ENCODE measurements at regions of chr13 and their contacts with region 1.

Region 1: DNA sequence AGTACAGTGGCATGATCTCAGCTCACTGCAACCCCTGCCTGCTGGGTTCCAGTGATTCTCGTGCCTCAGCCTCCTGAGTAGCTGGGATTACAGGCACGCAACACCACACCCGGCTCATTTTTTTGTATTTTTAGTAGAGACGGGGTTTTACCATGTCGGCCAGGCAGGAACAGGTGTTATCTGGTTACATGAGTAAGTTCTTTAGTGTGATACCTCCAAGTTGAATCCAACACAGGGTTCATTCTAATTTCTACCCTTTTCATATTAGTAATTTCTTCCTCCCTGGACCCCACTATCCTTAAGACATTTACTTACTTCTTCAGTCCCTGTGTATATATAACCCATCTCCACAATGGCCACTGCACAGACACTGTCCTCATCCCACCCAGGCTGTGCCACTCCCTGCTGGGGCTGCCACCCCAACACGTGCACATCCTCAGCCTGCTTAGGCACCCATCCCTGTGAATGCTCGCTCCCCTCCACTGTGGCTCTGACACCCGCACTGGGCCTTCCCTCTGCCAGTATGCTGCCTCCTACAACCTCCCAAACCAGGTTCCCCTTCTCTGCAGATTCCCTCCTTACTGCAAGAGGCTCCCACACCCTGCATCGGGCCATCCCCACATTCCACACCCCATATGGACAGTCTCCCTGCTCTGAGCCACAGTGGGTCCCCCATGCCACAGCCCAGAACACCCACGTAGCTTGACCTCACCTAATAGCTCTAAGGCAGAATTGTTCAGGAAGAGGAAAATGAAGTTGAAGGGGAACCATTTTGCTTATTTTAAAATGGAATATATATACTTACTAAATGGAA is 147.1 kb downstream of the TBC1D4 start:
- DNase-seq: no peak
- ATAC-seq: no peak
- H3K4me3 ChIP-seq: no peak overlapping the region
- H3K27ac ChIP-seq: no peak overlapping the region
- H3K4me1 ChIP-seq: no peaks in the 10 kb centered on the region
- H3K27me3 ChIP-seq: no peaks in the 10 kb centered on the region

Region 2: DNA sequence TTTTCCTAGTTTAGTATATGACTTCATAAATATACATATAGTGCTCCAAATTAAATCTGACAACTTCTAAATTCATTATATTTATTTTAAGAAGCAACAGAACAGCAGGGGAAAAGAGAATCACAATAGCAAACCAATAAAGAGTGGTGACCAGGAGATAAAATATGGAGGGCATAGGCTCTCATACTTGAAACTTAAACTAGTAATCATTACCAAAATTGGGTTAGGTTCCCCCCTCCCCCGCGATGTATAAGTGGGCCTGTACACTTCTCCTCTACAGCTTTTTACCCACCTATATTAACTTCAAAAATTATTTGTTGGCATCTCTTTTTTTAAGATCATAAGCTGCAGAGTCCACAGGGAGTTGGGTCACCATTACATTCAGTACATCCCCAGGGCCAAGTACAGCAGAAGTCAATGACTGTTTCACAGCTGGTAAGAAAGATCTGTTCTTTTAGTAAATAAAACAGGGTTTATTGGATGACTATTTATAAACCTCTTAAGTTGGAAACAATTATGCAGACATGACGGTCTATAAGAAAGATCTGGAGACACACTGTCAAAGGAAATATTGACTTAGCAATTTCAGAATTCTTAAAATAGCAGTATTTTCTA is 1230.1 kb before region 1 on chr13:
- intact Hi-C with region 1: no loop called
- DNase-seq: no peak
- ATAC-seq: no peak
- H3K4me3 ChIP-seq: no peak overlapping the region
- H3K27ac ChIP-seq: no peak overlapping the region
- H3K4me1 ChIP-seq: peaks cover 3 to 4% of the 10 kb centered on the region in 2 donors
- H3K27me3 ChIP-seq: no peaks in the 10 kb centered on the region

Region 3: DNA sequence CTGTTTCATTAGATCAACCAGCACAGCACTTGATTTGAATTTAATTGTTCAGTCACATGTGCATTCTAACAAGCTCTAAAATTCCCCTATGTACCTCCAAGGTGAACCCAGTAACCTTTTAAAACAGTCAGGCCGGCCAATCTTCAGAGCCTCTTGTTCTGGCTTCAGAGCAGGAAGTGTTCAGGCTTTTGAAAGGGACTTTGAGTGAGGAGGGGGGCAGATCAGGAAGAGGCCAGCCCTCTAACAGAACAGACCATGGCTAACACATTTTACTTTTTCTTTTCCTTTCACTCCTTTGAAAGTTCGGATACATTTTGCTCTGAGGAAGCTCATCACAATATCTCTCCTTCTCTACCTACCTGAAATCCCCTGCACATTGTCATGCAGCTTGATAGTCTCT is 243.1 kb before region 1 on chr13:
- intact Hi-C with region 1: no loop called
- DNase-seq: no peak
- ATAC-seq: no peak
- H3K4me3 ChIP-seq: no peak overlapping the region
- H3K27ac ChIP-seq: no peak overlapping the region
- H3K4me1 ChIP-seq: no peaks in the 10 kb centered on the region
- H3K27me3 ChIP-seq: no peaks in the 10 kb centered on the region

Region 4: DNA sequence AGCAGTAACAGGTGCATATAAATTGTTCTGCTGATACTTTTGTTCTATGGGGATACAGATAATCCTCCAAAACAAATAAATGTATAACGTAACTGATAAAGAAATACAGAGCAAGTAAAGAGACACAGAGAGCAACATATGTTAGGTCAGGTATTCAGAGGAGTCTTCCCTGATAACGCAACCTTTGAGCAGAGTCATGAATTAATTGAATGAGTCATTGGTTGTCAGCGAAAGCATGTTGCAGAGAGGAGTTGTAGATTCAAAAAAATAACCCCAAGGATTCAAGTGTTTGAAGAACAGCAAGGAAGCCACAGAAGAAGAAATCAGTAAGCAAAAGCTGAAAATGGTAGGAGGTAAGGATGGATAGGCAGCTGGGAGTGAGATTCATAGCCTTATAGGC is 98.1 kb before region 1 on chr13:
- intact Hi-C with region 1: no loop called
- DNase-seq: no peak
- ATAC-seq: no peak
- H3K4me3 ChIP-seq: no peak overlapping the region
- H3K27ac ChIP-seq: no peak overlapping the region
- H3K4me1 ChIP-seq: no peaks in the 10 kb centered on the region
- H3K27me3 ChIP-seq: no peaks in the 10 kb centered on the region

Region 5: DNA sequence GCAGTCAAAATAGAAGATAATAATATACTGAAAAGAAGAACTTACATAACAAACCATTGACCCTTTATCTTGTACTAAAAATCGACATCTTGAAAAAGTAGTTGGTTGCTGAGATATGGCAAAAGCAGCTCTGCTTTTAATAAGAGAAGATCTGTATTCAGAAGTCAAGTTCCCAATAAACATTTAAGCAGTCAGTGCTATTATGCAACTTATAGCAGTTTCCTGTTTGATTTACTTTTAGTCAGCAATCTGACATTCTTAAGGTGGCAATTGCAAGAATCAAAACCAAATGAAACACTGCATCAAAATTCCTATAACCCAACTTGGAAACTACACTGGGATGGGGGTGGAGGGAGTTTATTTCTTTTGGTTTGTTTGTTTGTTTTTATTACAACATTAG is 18.4 kb before region 1 on chr13:
- intact Hi-C with region 1: loop called in 1 of 2 experiments (anchors 2 kb)
- DNase-seq: no peak
- ATAC-seq: no peak
- H3K4me3 ChIP-seq: no peak overlapping the region
- H3K27ac ChIP-seq: no peak overlapping the region
- H3K4me1 ChIP-seq: no peaks in the 10 kb centered on the region
- H3K27me3 ChIP-seq: no peaks in the 10 kb centered on the region